ENCODE measurements at regions of chr20 and their contacts with region 1.

Region 1: DNA sequence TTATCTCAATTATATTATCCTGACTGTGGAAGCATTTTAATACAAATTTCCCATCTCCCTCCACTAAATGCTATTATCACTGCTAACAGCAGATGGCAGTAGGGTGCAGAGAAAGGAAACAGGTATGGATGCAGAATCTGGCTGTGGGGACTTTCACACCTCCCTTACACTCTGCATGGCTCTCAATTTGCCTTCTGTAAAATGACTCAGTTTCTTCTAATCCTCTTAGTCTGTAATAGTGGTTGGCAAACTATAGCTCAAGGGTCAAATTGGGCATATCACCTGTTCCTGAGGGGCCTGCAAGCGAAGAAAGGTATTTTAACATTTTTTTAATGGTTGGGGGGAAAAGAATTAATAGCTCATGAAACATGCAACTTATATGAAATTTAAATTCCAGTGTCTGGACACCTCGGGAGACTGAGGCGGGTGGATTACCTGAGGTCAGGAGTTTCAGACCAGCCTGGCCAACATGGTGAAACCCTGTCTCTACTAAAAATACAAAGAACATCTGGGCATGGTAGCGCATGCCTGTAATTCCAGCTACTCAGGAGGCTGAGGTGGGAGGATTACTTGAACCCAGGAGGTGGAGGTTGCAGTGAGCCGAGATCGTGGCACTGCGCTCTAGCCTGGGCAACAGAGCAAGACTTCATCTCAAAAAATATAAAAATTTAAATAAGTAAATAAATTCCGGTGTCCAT is 83.5 kb downstream of the ZMYND8 start:
- DNase-seq: peak; percentile 26 to 62 (median 52)
- H3K4me3 ChIP-seq: no peak overlapping the region
- H3K4me3 Mint-ChIP-seq: no peak overlapping the region
- H3K27ac ChIP-seq: no peak overlapping the region
- H3K27ac Mint-ChIP-seq: peak overlapping the region in 1 of 7 donors; percentile 15
- H3K4me1 ChIP-seq: no peaks in the 10 kb centered on the region
- H3K4me1 Mint-ChIP-seq: peaks cover 6% of the 10 kb centered on the region
- H3K27me3 ChIP-seq: no peaks in the 10 kb centered on the region
- H3K27me3 Mint-ChIP-seq: peaks cover 0 to 1% (median 0%) of the 10 kb centered on the region in 3 donors
- CTCF ChIP-seq: peak; percentile 86

Region 2: GRCh38 chr20:47379433-47380150 is 106.5 kb after region 1 on chr20:
- intact Hi-C with region 1: loop called (anchors 1 kb)
- DNase-seq: no peak
- H3K4me3 ChIP-seq: no peak overlapping the region
- H3K4me3 Mint-ChIP-seq: no peak overlapping the region
- H3K27ac ChIP-seq: no peak overlapping the region
- H3K27ac Mint-ChIP-seq: no peak overlapping the region
- H3K4me1 ChIP-seq: peaks cover 0 to 6% of the 10 kb centered on the region in 2 donors
- H3K4me1 Mint-ChIP-seq: peaks cover 6% of the 10 kb centered on the region
- H3K27me3 ChIP-seq: no peaks in the 10 kb centered on the region
- H3K27me3 Mint-ChIP-seq: peaks cover 1 to 5% (median 1%) of the 10 kb centered on the region in 3 donors
- CTCF ChIP-seq: no peak

Region 3: GRCh38 chr20:47620808-47621805 is 348.1 kb after region 1 on chr20:
- intact Hi-C with region 1: loop called (anchors 2 to 10 kb)
- DNase-seq: peak; percentile 6 to 45 (median 22)
- H3K4me3 ChIP-seq: no peak overlapping the region
- H3K4me3 Mint-ChIP-seq: no peak overlapping the region
- H3K27ac ChIP-seq: no peak overlapping the region
- H3K27ac Mint-ChIP-seq: no peak overlapping the region
- H3K4me1 ChIP-seq: no peaks in the 10 kb centered on the region
- H3K4me1 Mint-ChIP-seq: no peaks in the 10 kb centered on the region
- H3K27me3 ChIP-seq: no peaks in the 10 kb centered on the region
- H3K27me3 Mint-ChIP-seq: no peaks in the 10 kb centered on the region
- CTCF ChIP-seq: peak; percentile 86

Measured in CD14-positive monocyte (primary cell).